ENCODE measurements at regions of chr5 and their contacts with region 1.

Region 1: GRCh38 chr5:14505310-14506032 is 76.1 kb upstream of the OTULINL start:
- DNase-seq: peak; percentile 44
- ATAC-seq: peak; percentile 70
- H3K4me3 Mint-ChIP-seq: no peak overlapping the region
- H3K27ac Mint-ChIP-seq: no peak overlapping the region
- H3K4me1 Mint-ChIP-seq: no peaks in the 10 kb centered on the region
- H3K27me3 Mint-ChIP-seq: no peaks in the 10 kb centered on the region
- CTCF ChIP-seq: peak; percentile 46

Region 2: DNA sequence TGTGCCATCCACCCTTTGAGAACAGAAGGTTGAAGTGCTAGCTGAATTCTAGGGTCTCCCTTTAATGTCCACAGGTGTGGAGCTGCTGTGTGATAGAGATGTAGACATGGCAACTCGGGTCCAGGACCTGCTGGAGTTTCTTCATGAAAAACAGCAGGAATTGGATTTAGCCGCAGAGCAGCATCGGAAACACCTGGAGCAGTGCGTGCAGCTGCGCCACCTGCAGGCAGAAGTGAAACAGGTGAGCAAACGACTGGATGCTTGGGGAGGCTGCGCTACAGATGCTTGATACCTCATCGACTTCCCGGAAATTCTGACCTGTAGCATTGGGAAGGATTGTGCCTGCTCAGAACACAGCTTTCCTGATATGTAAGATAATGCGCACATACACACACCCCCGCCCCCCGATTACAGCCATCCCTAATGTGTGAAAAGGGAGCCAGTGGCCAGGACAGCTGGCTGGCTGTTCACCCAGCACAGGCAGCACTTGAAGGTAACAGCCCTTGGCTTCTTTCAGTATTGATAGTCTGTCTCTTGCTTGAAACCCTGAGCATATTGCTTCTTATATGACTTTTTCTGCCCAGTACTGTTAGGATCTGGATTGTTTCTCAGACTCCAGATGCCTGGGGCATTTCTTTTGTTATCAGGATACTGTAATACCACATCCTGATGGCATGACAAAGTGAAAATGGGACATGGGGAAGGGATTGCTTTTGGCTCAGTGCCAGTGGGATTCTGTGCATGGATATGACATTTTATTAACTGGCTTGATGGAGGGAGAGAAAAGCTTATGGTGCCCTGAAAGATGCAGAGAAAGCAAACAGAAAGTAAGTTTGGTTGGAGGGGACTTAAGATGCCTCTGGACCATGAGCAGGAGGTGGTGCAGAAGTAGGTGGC is 140.6 kb before region 1 on chr5:
- CTCF ChIA-PET with region 1: no interaction called
- POLR2A ChIA-PET with region 1: no interaction called
- DNase-seq: peak; percentile 84
- ATAC-seq: peak; percentile 91
- H3K4me3 Mint-ChIP-seq: no peak overlapping the region
- H3K27ac Mint-ChIP-seq: 0 out of 2 replicates have a peak overlapping the region, but pooled peaks have one; percentile 30
- H3K4me1 Mint-ChIP-seq: peaks cover 10% of the 10 kb centered on the region
- H3K27me3 Mint-ChIP-seq: no peaks in the 10 kb centered on the region
- CTCF ChIP-seq: peak; percentile 71; the same call in 1 of the 2 replicates

Region 3: GRCh38 chr5:14447958-14448911 is 57.2 kb before region 1 on chr5:
- CTCF ChIA-PET with region 1: no interaction called
- POLR2A ChIA-PET with region 1: no interaction called
- DNase-seq: no peak
- ATAC-seq: peak; percentile 18
- H3K4me3 Mint-ChIP-seq: no peak overlapping the region
- H3K27ac Mint-ChIP-seq: peak overlapping the region; percentile 45; the same call in 1 of the 2 replicates
- H3K4me1 Mint-ChIP-seq: peaks cover 51% of the 10 kb centered on the region
- H3K27me3 Mint-ChIP-seq: no peaks in the 10 kb centered on the region
- CTCF ChIP-seq: no peak

Region 4: DNA sequence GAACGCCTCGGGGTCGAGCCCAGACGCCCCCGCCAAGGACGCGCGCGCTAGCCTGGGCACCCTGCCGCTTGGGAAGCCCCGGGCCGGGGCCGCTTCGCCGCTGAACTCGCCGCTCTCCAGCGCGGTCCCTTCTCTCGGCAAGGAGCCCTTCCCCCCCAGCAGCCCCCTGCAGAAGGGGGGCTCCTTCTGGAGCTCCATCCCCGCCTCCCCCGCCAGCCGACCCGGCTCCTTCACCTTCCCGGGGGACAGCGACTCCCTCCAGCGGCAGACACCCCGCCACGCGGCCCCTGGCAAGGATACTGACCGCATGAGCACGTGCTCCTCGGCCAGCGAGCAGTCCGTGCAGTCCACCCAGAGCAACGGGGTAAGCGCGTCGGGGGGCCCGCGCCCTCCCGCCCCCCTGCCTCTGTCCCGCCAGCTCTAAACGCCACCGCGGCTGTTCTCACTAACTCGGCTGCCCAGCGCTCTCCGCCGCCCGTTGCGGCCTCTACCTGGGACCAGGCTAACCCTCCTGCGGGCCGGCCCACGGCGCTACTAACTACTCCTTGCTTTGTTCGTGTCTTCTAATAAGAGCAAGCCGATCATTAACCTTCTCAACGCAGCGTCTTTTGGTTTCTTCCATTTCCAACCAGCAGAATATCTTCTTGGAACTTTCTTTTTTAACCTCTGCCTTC is 17.4 kb before region 1 on chr5:
- CTCF ChIA-PET with region 1: interaction called, 10 read pairs
- POLR2A ChIA-PET with region 1: no interaction called
- DNase-seq: peak; percentile 54
- ATAC-seq: peak; percentile 50
- H3K4me3 Mint-ChIP-seq: peak overlapping the region; percentile 35
- H3K27ac Mint-ChIP-seq: no peak overlapping the region
- H3K4me1 Mint-ChIP-seq: peaks cover 5% of the 10 kb centered on the region
- H3K27me3 Mint-ChIP-seq: no peaks in the 10 kb centered on the region
- CTCF ChIP-seq: no peak

Region 5: GRCh38 chr5:14516901-14517300 is 11.4 kb after region 1 on chr5:
- CTCF ChIA-PET with region 1: interaction called, 13 read pairs
- POLR2A ChIA-PET with region 1: interaction called, 3 read pairs
- DNase-seq: no peak
- ATAC-seq: no peak
- H3K4me3 Mint-ChIP-seq: no peak overlapping the region
- H3K27ac Mint-ChIP-seq: no peak overlapping the region
- H3K4me1 Mint-ChIP-seq: peaks cover 6% of the 10 kb centered on the region; the same call in 1 of the 2 replicates
- H3K27me3 Mint-ChIP-seq: no peaks in the 10 kb centered on the region
- CTCF ChIP-seq: no peak

Measured in WTC11 (cell line).